CD8-positive, alpha-beta memory T cell (primary cell): ENCODE measurements at regions of chr16 and their contacts with region 1.

Region 1: DNA sequence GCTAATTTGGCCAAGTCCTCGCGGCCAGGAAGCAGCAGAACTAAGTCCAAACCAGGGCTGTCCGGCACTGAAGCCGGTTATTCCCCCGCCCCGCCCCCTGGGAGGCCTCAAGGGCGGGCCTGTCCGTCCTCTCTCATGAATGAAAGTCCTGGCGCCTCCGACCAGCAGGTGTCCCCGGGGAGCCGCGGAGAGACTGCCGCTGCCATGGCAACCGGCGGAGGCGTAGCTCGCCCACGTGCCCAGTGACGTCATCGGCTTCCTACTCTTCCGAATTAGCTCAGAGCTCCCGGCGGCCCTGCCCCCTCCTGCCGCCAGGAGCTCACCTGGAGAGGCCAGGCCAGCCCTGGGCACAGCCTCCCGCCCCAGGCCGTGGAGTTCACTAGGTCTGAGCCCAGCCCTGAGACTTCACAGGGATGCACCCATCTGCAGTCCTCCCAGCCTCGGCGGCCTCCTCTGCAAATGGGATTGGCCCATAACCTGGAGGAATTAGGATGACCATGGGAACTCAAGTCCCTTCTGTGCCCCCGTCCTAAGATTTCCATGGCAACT is 1.3 kb downstream of the SPATA2L start:
- DNase-seq: peak; percentile 92 to 98 (median 97)
- H3K4me3 ChIP-seq: peak overlapping the region; percentile 81
- H3K4me3 Mint-ChIP-seq: peak overlapping the region; percentile 57 to 92 (median 73)
- H3K27ac ChIP-seq: peak overlapping the region; percentile 96
- H3K27ac Mint-ChIP-seq: peak overlapping the region; percentile 81 to 97 (median 90)
- H3K4me1 ChIP-seq: peaks cover 34% of the 10 kb centered on the region
- H3K4me1 Mint-ChIP-seq: peaks cover 20 to 45% (median 30%) of the 10 kb centered on the region in 3 donors
- H3K27me3 ChIP-seq: no peaks in the 10 kb centered on the region
- H3K27me3 Mint-ChIP-seq: no peaks in the 10 kb centered on the region

Region 2: DNA sequence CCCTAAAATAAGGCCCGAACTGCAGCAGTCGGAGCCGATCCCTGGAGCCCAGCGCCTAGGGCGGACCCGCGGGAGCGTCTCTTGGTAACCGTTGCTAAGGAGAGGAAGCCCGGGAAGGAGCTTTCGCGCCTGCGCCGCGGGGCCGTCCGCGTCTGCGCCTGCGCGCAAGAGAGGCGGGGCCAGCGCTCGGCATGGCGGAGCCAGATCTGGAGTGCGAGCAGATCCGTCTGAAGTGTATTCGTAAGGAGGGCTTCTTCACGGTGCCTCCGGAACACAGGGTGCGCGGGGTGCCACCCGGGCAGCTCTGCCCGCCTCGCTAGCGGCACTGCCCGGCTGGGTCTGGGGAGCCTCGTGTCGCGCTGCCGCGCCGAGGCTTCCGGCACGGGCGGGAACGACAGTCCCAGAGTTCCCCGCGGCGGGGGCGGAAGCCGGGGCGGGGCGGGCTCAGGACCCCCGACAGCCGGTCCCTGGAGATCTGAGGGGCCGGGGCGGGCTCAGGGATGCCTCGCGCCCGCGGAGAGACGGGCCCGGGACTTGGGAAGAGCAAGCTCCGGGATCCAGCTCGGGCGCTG is 13.6 kb before region 1 on chr16 and contains the start of gene CDK10:
- CTCF ChIA-PET with region 1: interaction called, 17 read pairs
- POLR2A ChIA-PET with region 1: interaction called, 7 read pairs
- DNase-seq: peak; percentile 79 to 92 (median 90)
- H3K4me3 ChIP-seq: peak within 1 kb of the TSS; percentile 88
- H3K4me3 Mint-ChIP-seq: peak within 1 kb of the TSS; percentile 89 to 98 (median 92)
- H3K27ac ChIP-seq: peak within 1 kb of the TSS; percentile 78
- H3K27ac Mint-ChIP-seq: peak within 1 kb of the TSS; percentile 86 to 95 (median 92)
- H3K4me1 ChIP-seq: peaks cover 12% of the 10 kb centered on the region
- H3K4me1 Mint-ChIP-seq: peaks cover 8 to 21% (median 12%) of the 10 kb centered on the region in 3 donors
- H3K27me3 ChIP-seq: no peaks in the 10 kb centered on the region
- H3K27me3 Mint-ChIP-seq: no peaks in the 10 kb centered on the region
- total RNA-seq, gene CDK10: 74.8 to 79.0 TPM

Region 3: DNA sequence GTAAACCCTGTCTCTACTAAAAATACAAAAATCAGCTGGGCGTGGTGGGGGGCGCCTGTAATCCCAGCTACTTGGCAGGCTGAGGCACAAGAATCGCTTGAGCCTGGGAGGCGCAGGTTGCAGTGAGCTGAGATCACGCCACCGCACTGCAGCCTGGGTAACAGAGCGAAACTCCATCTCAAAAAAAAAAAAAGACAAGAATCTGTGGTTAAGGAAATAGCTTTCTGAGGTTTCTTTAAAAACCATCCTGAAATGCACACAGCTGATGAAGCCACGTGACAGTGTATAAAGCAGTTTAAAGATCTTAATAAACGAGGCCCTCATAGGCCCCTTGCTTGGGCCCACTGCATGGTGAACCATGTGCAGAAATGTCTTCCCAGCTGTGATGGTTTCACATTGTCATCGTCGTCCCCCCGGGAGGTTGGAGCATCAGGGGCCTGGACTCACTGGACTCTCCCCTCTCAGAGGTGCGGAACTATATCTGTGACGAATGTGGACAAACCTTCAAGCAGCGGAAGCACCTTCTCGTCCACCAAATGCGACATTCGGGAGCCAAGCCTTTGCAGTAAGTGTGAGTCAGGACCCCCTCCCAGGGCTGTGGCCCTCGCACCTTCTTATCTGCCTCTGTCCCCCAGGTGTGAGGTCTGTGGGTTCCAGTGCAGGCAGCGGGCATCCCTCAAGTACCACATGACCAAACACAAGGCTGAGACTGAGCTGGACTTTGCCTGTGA is 37.3 kb after region 1 on chr16:
- CTCF ChIA-PET with region 1: interaction called, 24 read pairs
- POLR2A ChIA-PET with region 1: interaction called, 7 read pairs
- DNase-seq: peak; percentile 24 to 73 (median 71)
- H3K4me3 ChIP-seq: no peak overlapping the region
- H3K4me3 Mint-ChIP-seq: peak overlapping the region; percentile 19 to 80 (median 63)
- H3K27ac ChIP-seq: no peak overlapping the region
- H3K27ac Mint-ChIP-seq: peak overlapping the region; percentile 23 to 94 (median 78)
- H3K4me1 ChIP-seq: peaks cover 40% of the 10 kb centered on the region
- H3K4me1 Mint-ChIP-seq: peaks cover 41 to 71% (median 51%) of the 10 kb centered on the region in 3 donors
- H3K27me3 ChIP-seq: no peaks in the 10 kb centered on the region
- H3K27me3 Mint-ChIP-seq: no peaks in the 10 kb centered on the region

Region 4: DNA sequence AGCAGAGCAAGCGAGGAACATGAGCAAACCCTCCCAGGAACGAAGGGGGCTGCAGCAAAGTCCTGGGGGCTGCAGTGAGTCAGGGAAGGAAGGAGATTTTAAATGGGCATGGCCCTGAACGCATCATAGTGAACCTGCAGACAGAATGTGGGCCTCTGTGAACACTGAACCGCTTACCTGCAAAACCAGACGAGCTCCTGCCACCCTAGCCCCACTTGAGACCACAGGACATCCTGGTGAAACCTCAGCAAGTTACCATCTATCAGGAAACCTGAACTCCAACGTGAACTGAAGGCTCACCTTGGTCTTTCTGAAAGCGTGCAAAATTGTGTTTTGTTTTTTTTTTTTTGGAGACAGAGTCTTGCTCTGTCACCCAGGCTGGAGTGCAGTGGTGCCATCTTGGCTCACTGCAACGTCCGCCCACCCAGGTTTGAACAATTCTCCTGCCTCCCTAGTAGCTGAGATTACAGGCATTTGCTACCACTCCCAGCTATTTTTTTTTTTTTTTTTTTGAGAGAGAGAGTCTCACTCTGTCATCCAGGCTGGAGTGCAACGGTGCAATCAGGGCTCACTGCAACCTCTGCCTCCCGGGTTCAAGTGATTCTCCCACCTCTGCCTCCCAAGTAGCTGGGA is 85.5 kb after region 1 on chr16:
- CTCF ChIA-PET with region 1: interaction called, 323 read pairs
- POLR2A ChIA-PET with region 1: interaction called, 5 read pairs
- DNase-seq: peak; percentile 48 to 85 (median 79)
- H3K4me3 ChIP-seq: no peak overlapping the region
- H3K4me3 Mint-ChIP-seq: peak overlapping the region; percentile 14 to 82 (median 63)
- H3K27ac ChIP-seq: peak overlapping the region; percentile 49
- H3K27ac Mint-ChIP-seq: peak overlapping the region; percentile 80 to 100 (median 98)
- H3K4me1 ChIP-seq: peaks cover 41% of the 10 kb centered on the region
- H3K4me1 Mint-ChIP-seq: peaks cover 29 to 40% (median 35%) of the 10 kb centered on the region in 3 donors
- H3K27me3 ChIP-seq: no peaks in the 10 kb centered on the region
- H3K27me3 Mint-ChIP-seq: peaks cover 0 to 5% of the 10 kb centered on the region in 2 donors

Region 5: GRCh38 chr16:89873972-89874689 is 174.0 kb after region 1 on chr16:
- CTCF ChIA-PET with region 1: interaction called, 20 read pairs
- POLR2A ChIA-PET with region 1: interaction called, 3 read pairs
- DNase-seq: peak; percentile 90 to 95 (median 94)
- H3K4me3 ChIP-seq: peak overlapping the region; percentile 82
- H3K4me3 Mint-ChIP-seq: peak overlapping the region; percentile 90 to 97 (median 93)
- H3K27ac ChIP-seq: peak overlapping the region; percentile 98
- H3K27ac Mint-ChIP-seq: peak overlapping the region; percentile 98 to 100 (median 98)
- H3K4me1 ChIP-seq: peaks cover 21% of the 10 kb centered on the region
- H3K4me1 Mint-ChIP-seq: peaks cover 18 to 28% (median 21%) of the 10 kb centered on the region in 3 donors
- H3K27me3 ChIP-seq: no peaks in the 10 kb centered on the region
- H3K27me3 Mint-ChIP-seq: no peaks in the 10 kb centered on the region